ENCODE measurements at regions of chr10 and their contacts with region 1.

Region 1: DNA sequence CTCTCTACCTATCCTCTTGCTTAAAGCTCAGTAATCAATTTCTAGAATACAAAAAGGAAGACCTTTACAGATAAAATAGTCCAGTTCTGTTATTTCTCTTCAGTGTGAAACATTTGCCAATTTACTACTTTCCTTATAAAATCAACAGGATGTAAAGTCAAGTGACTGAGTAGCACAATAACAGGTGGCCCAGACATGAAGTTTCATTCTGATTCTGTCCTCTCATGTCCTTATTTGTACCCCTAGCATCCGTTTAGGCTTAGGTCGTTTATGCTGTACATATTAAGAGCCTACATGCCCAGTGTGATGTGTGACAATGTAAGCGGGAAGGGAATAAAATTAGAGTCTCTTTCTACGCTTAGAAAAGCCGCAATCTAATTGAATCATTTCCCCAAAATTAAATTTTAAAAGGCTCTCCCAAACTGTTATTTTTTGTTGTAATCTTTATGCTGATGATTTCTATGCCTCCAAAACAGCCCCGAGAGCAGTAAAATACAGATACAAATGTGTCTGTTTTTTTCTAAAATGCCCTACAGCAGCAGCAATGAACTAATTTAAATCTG is 29.1 kb downstream of the EPC1 start:
- DNase-seq: no peak

Region 2: GRCh38 chr10:32273336-32273735 is 44.5 kb before region 1 on chr10:
- intact Hi-C with region 1: no loop called
- DNase-seq: no peak

Region 3: DNA sequence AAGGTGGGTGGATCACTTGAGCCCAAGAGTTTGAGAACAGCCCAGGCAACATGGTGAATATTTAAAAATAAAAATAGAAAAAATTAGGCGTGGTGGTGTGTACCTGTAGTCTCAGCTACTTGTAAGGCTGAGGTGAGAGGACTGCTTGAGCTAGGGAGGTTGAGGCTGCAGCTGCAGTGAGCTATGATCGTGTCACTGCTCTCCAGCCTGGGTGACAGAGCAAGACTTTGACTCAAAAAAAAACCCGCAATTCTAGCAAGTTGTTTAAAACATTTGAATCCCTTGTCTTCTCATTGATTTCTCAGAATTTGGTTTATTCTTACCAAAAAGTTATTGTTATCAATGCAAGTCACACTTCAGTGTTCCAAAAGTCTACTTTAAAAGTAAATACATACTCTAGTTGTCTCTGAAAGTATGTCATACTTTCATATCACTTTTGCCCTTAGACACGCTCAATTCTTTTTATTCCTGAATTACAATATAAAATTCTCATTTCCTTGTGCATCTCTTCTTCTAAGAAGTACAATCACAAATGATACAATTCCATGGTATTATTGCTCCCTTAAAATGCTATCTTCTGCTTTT is 22.8 kb after region 1 on chr10:
- intact Hi-C with region 1: loop called in 1 of 2 experiments (anchors 2 kb)
- DNase-seq: no peak

Region 4: DNA sequence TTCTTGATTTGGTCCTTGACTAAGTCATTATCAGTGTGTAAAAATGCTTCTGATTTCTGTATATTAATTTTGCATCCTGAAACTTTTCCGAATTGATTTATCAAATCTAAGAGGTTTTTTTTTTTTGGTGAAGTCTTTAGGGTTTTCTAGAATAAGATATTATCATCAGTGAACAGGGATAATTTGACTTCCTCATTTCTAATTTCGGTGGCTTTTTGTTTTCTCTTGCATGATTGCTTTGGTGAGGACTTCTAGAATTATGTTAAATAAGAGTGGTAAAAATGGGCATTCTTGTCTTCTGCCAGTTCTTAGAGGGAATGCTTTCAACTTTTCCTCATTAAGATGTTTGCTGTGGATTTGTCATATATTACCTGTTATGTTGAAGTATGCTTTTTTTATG is 298.6 kb after region 1 on chr10:
- intact Hi-C with region 1: no loop called
- DNase-seq: no peak